ENCODE measurements at regions of chr6 and their contacts with region 1.

Region 1: GRCh38 chr6:108074359-108075144 is at the start of gene OSTM1:
- DNase-seq: peak; percentile 84 to 97 (median 94)
- ATAC-seq: peak; percentile 94
- H3K4me3 ChIP-seq: peak within 1 kb of the TSS; percentile 99
- H3K4me3 Mint-ChIP-seq: peak within 1 kb of the TSS; percentile 93
- H3K27ac ChIP-seq: peak within 1 kb of the TSS; percentile 50 to 64
- H3K27ac Mint-ChIP-seq: peak within 1 kb of the TSS; percentile 91
- H3K4me1 ChIP-seq: peaks cover 22% of the 10 kb centered on the region
- H3K4me1 Mint-ChIP-seq: peaks cover 27% of the 10 kb centered on the region
- H3K27me3 ChIP-seq: no peaks in the 10 kb centered on the region
- H3K27me3 Mint-ChIP-seq: peaks cover 6% of the 10 kb centered on the region
- CTCF ChIP-seq: no peak
- total RNA-seq, gene OSTM1: 16.3 to 20.9 TPM

Region 2: DNA sequence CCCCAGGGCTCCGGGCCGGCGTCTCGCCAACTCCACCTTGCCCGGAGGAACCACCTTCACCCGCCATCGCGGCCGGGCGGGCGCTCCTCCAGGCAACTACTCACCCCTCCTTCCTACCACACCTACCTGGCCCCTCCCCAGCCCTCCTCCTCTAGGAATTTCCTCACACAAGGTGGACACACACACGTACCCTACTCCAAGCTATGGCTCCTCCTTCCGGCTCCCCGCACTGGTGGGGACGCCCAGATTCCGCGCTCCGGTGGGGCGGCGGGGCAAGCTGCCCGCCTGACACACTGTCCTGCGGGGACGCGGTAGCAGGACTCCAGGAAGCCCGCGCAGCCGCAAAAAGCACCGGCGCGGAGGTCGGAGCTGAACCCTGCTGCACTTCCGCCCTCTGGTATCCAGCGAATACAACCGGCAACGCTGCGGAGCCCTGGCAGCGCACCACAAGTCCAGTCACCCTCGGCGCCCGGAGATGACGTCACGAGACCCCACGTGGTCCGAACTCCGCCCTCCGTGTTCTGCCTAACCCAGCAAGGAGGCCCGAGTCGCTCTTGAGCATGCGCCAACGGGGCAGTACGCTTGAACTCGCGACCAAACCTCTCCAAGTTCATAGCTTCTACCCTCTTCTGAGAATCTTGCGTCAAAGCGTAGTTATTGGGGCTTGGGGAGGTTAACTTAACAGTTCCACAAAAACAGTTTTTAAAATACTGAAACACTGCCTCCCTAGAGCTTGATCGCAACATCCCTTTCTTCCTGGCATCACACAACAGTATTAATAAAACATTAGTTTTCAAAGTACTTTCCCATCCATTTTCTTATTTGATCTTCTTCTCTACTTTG is 1749.0 kb before region 1 on chr6 and contains the start of gene ATG5:
- CTCF ChIA-PET with region 1: no interaction called
- POLR2A ChIA-PET with region 1: no interaction called
- intact Hi-C with region 1: loop called in 1 of 2 experiments (anchors 5 kb)
- DNase-seq: peak; percentile 98 to 100 (median 100)
- ATAC-seq: peak; percentile 92
- H3K4me3 ChIP-seq: peak within 1 kb of the TSS; percentile 92
- H3K4me3 Mint-ChIP-seq: peak within 1 kb of the TSS; percentile 99
- H3K27ac ChIP-seq: peak within 1 kb of the TSS; percentile 85 to 91
- H3K27ac Mint-ChIP-seq: peak within 1 kb of the TSS; percentile 96
- H3K4me1 ChIP-seq: peaks cover 22% of the 10 kb centered on the region
- H3K4me1 Mint-ChIP-seq: peaks cover 50% of the 10 kb centered on the region
- H3K27me3 ChIP-seq: peaks cover 0 to 12% of the 10 kb centered on the region in 2 experiments
- H3K27me3 Mint-ChIP-seq: peaks cover 19% of the 10 kb centered on the region
- CTCF ChIP-seq: no peak
- total RNA-seq, gene ATG5: 19.4 to 23.2 TPM

Region 3: GRCh38 chr6:107459283-107460082 is 615.1 kb before region 1 on chr6 and contains the start of gene PDSS2:
- CTCF ChIA-PET with region 1: no interaction called
- POLR2A ChIA-PET with region 1: no interaction called
- intact Hi-C with region 1: loop called in 1 of 2 experiments (anchors 5 kb)
- DNase-seq: peak; percentile 89 to 98 (median 96)
- ATAC-seq: peak; percentile 96
- H3K4me3 ChIP-seq: peak within 1 kb of the TSS; percentile 91
- H3K4me3 Mint-ChIP-seq: peak within 1 kb of the TSS; percentile 94
- H3K27ac ChIP-seq: peak within 1 kb of the TSS; percentile 71 to 79
- H3K27ac Mint-ChIP-seq: peak within 1 kb of the TSS; percentile 97
- H3K4me1 ChIP-seq: peaks cover 16% of the 10 kb centered on the region
- H3K4me1 Mint-ChIP-seq: peaks cover 23% of the 10 kb centered on the region
- H3K27me3 ChIP-seq: no peaks in the 10 kb centered on the region
- H3K27me3 Mint-ChIP-seq: no peaks in the 10 kb centered on the region
- CTCF ChIP-seq: no peak
- total RNA-seq, gene PDSS2: 5.8 to 6.6 TPM

Region 4: GRCh38 chr6:107862383-107862782 is 212.2 kb before region 1 on chr6:
- CTCF ChIA-PET with region 1: no interaction called
- POLR2A ChIA-PET with region 1: no interaction called
- intact Hi-C with region 1: no loop called
- DNase-seq: no peak
- ATAC-seq: no peak
- H3K4me3 ChIP-seq: no peak overlapping the region
- H3K4me3 Mint-ChIP-seq: no peak overlapping the region
- H3K27ac ChIP-seq: no peak overlapping the region
- H3K27ac Mint-ChIP-seq: no peak overlapping the region
- H3K4me1 ChIP-seq: peaks cover 3% of the 10 kb centered on the region
- H3K4me1 Mint-ChIP-seq: peaks cover 7% of the 10 kb centered on the region
- H3K27me3 ChIP-seq: no peaks in the 10 kb centered on the region
- H3K27me3 Mint-ChIP-seq: peaks cover 4% of the 10 kb centered on the region
- CTCF ChIP-seq: no peak

Region 5: GRCh38 chr6:107957909-107958688 is 116.5 kb before region 1 on chr6 and contains the start of gene SEC63:
- CTCF ChIA-PET with region 1: no interaction called
- POLR2A ChIA-PET with region 1: interaction called, 3 read pairs
- intact Hi-C with region 1: loop called (anchors 2 to 10 kb)
- DNase-seq: peak; percentile 94 to 98 (median 97)
- ATAC-seq: peak; percentile 97
- H3K4me3 ChIP-seq: peak within 1 kb of the TSS; percentile 81
- H3K4me3 Mint-ChIP-seq: peak within 1 kb of the TSS; percentile 99
- H3K27ac ChIP-seq: peak within 1 kb of the TSS; percentile 46 to 61
- H3K27ac Mint-ChIP-seq: peak within 1 kb of the TSS; percentile 82
- H3K4me1 ChIP-seq: peaks cover 16% of the 10 kb centered on the region
- H3K4me1 Mint-ChIP-seq: peaks cover 32% of the 10 kb centered on the region
- H3K27me3 ChIP-seq: no peaks in the 10 kb centered on the region
- H3K27me3 Mint-ChIP-seq: no peaks in the 10 kb centered on the region
- CTCF ChIP-seq: no peak
- total RNA-seq, gene SEC63: 80.3 to 86.7 TPM

Region 6: GRCh38 chr6:108127826-108128225 is 53.3 kb after region 1 on chr6:
- CTCF ChIA-PET with region 1: no interaction called
- POLR2A ChIA-PET with region 1: no interaction called
- intact Hi-C with region 1: no loop called
- DNase-seq: no peak
- ATAC-seq: no peak
- H3K4me3 ChIP-seq: no peak overlapping the region
- H3K4me3 Mint-ChIP-seq: no peak overlapping the region
- H3K27ac ChIP-seq: no peak overlapping the region
- H3K27ac Mint-ChIP-seq: no peak overlapping the region
- H3K4me1 ChIP-seq: no peaks in the 10 kb centered on the region
- H3K4me1 Mint-ChIP-seq: no peaks in the 10 kb centered on the region
- H3K27me3 ChIP-seq: peaks cover 39 to 85% of the 10 kb centered on the region in 2 experiments
- H3K27me3 Mint-ChIP-seq: peaks cover 94% of the 10 kb centered on the region
- CTCF ChIP-seq: no peak

Region 7: DNA sequence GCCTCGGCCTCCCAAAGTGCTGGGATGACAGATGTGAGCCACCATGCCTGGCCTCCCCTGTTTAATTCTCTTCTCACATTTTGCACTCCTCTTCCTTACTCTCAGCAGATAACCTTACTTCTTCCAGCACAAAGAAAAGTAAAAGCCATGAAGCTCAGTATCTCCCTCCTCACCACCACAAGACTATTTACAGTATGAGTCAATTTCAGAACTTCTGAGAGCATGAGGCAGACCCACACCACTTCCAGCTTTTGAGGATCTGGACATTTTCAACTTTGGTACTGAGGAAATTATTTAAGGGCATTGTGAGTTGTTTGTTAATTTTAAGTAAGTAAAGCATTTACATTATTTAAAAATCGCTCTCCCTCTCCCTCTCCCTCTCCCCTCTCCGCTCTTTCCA is 194.3 kb after region 1 on chr6:
- CTCF ChIA-PET with region 1: no interaction called
- POLR2A ChIA-PET with region 1: no interaction called
- intact Hi-C with region 1: no loop called
- DNase-seq: no peak
- ATAC-seq: no peak
- H3K4me3 ChIP-seq: no peak overlapping the region
- H3K4me3 Mint-ChIP-seq: no peak overlapping the region
- H3K27ac ChIP-seq: no peak overlapping the region
- H3K27ac Mint-ChIP-seq: no peak overlapping the region
- H3K4me1 ChIP-seq: no peaks in the 10 kb centered on the region
- H3K4me1 Mint-ChIP-seq: no peaks in the 10 kb centered on the region
- H3K27me3 ChIP-seq: no peaks in the 10 kb centered on the region
- H3K27me3 Mint-ChIP-seq: peaks cover 4% of the 10 kb centered on the region
- CTCF ChIP-seq: no peak

Region 8: DNA sequence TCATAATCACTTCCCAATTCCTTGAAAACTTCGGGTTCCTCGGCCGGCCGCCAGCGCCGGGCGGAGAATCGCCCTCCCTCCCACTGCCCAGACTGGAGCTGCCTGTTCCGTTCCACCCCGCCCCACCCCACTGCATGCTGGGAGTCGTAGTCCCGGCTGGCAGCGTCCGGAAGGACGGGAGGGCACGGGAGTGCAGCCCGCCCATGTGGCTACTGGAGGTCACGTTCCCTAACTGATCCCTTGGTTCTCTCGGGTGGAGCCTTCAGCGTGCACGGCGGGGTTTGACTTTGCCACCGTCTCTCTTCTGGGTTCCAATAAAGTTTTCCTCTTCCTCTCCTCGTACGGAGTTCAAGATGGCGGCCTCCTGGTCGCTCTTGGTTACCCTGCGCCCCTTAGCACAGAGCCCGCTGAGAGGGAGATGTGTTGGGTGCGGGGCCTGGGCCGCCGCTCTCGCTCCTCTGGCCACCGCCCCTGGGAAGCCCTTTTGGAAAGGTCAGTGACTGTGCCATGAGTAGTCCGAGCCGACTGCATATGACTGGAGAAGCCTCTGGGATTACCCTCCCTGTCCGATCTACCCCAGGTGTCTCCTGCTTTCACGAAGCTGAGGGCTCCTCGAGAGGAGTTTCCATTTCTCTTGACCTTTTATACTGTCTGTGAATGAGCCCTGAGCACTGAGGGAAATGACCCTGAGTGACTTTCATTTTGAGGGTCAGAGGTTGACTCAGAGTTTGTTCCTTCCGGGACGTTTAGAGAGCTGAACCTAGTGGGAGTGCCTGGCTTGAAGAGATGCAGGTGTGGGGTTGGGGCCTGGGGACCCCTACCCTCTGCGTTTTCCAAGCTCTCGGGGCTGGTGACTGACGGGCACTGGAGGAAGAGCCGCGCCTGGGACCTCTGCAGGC is 220.4 kb after region 1 on chr6 and contains the start of gene AFG1L:
- CTCF ChIA-PET with region 1: no interaction called
- POLR2A ChIA-PET with region 1: no interaction called
- intact Hi-C with region 1: loop called in 1 of 2 experiments (anchors 5 kb)
- DNase-seq: peak; percentile 77 to 90 (median 83)
- ATAC-seq: peak; percentile 89
- H3K4me3 ChIP-seq: peak within 1 kb of the TSS; percentile 91
- H3K4me3 Mint-ChIP-seq: peak within 1 kb of the TSS; percentile 97
- H3K27ac ChIP-seq: peak within 1 kb of the TSS; percentile 93 to 95
- H3K27ac Mint-ChIP-seq: peak within 1 kb of the TSS; percentile 96
- H3K4me1 ChIP-seq: peaks cover 17% of the 10 kb centered on the region
- H3K4me1 Mint-ChIP-seq: peaks cover 30% of the 10 kb centered on the region
- H3K27me3 ChIP-seq: no peaks in the 10 kb centered on the region
- H3K27me3 Mint-ChIP-seq: no peaks in the 10 kb centered on the region
- CTCF ChIP-seq: no peak
- total RNA-seq, gene AFG1L: 3.0 to 3.9 TPM

Region 9: DNA sequence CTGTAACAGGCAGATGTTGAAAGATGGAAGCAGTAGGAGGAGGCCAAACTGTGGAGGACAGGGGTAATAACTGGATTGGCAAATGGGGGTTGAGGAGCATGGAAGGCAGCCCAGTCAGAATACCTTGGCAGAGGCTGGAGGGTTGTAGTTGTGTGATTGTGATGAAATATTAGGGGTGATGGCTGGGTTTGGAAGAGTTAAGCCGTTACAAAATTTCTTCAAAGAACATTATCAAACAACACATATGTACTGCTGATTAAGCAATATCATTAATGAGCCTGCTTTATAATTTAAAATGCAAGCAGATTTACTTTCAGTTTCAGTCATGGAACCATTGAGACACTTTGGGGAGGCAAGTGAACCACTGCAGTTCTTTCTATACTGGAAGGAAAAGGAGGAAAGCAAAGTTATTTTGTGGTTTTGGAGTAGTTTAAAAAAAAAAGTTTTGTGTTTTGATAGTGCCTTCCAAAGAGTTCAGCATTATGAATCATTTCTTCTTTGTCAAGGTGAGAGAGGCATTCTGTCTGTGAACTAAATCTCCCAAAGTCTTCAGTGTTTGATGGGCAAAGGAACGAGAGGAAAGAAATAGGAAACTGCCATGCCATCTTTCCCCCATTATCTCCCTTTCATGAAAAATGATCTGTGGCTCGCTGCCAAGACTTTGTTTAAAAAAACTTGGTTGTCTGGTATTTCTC is 506.8 kb after region 1 on chr6:
- CTCF ChIA-PET with region 1: no interaction called
- POLR2A ChIA-PET with region 1: no interaction called
- intact Hi-C with region 1: no loop called
- DNase-seq: peak in 3 of 14 experiments; percentile 31 to 60 (median 37)
- ATAC-seq: no peak
- H3K4me3 ChIP-seq: no peak overlapping the region
- H3K4me3 Mint-ChIP-seq: peak overlapping the region; percentile 42
- H3K27ac ChIP-seq: peak overlapping the region; percentile 18 to 29
- H3K27ac Mint-ChIP-seq: peak overlapping the region; percentile 65
- H3K4me1 ChIP-seq: peaks cover 19% of the 10 kb centered on the region
- H3K4me1 Mint-ChIP-seq: peaks cover 72% of the 10 kb centered on the region
- H3K27me3 ChIP-seq: no peaks in the 10 kb centered on the region
- H3K27me3 Mint-ChIP-seq: no peaks in the 10 kb centered on the region
- CTCF ChIP-seq: no peak